ENCODE measurements at regions of chr12 and their contacts with region 1.

Region 1: GRCh38 chr12:93378373-93379325 is 924 bp downstream of the NUDT4 start:
- DNase-seq: no peak
- ATAC-seq: peak; percentile 51
- H3K4me3 ChIP-seq: peak overlapping the region; percentile 87
- H3K27ac ChIP-seq: peak overlapping the region; percentile 98
- H3K4me1 ChIP-seq: peaks cover 15% of the 10 kb centered on the region
- H3K27me3 ChIP-seq: no peaks in the 10 kb centered on the region
- CTCF ChIP-seq: no peak
- EP300 ChIP-seq: no peak
- POLR2A ChIP-seq: peak; percentile 56
- RAD21 ChIP-seq: no peak

Region 2: DNA sequence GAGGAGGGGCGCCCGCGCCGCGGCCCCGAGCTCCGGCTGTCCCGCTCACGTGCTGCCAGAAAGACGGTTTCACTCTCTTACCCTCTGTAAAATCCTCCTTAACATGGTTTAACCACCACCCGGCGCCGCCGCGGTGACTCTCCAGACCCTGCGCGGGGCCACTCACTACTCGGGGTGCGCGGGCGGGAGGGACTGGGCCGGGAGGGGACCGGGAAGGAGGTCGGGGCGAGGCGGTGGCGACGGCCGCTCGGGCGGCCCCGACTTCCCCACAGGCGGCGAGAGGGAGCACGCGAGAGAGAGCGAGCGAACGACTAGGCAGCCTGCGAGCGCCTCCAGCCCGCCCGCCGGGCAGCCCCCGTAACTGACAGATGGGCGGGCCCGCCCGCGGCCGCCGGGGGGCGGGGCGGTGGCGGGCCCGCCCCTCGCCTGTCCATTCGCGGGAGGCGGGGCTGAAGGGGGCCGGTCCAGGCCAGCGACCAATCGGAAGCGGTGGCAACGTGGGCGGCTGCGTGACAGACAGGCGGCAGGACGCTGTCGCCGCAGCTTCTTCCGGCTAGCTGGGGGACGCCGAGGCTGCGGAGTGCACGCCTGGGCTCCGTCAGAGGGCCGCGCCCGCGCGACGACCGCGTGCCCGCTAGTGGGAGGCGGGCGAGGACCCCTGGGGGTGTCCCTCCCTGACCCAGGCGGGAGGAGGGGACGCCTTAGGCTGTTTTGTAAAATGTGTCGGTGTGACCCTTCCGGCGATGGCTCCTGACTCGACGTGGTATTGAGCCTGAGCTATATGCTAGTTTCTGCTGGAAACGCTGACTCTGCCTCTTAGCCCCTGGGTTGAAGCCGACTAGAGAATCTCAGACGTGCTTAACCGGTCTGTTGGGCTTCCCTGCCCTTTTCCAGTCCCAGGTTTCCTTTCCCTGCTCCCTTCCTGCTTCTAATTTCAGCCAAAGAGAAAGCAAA is 449.4 kb before region 1 on chr12 and contains the start of gene EEA1:
- CTCF ChIA-PET with region 1: interaction called, 6 read pairs
- POLR2A ChIA-PET with region 1: no interaction called
- RAD21 ChIA-PET with region 1: interaction called, 8 read pairs
- SMC1A ChIA-PET with region 1: interaction called, 5 read pairs
- in situ Hi-C with region 1: no loop called
- intact Hi-C with region 1: loop called (anchors 5 kb)
- DNase-seq: peak; percentile 84
- ATAC-seq: peak; percentile 87
- H3K4me3 ChIP-seq: peak within 1 kb of the TSS; percentile 79
- H3K27ac ChIP-seq: peak within 1 kb of the TSS; percentile 98
- H3K4me1 ChIP-seq: peaks cover 4% of the 10 kb centered on the region
- H3K27me3 ChIP-seq: no peaks in the 10 kb centered on the region
- CTCF ChIP-seq: peak in 2 of 3 experiments; percentile 29 to 31; a peak in 3 of 6 replicates
- EP300 ChIP-seq: peak; percentile 30 to 35; a peak in 2 of 4 replicates
- POLR2A ChIP-seq: peak; percentile 96
- RAD21 ChIP-seq: peak; percentile 16; the same call in 1 of the 2 replicates
- polyA plus RNA-seq, gene EEA1: 5.5 to 9.5 TPM

Region 3: GRCh38 chr12:93060666-93061471 is 317.8 kb before region 1 on chr12:
- CTCF ChIA-PET with region 1: interaction called, 3 read pairs
- POLR2A ChIA-PET with region 1: no interaction called
- RAD21 ChIA-PET with region 1: interaction called, 13 read pairs
- SMC1A ChIA-PET with region 1: interaction called, 4 read pairs
- in situ Hi-C with region 1: no loop called
- intact Hi-C with region 1: no loop called
- DNase-seq: peak; percentile 21
- ATAC-seq: peak; percentile 61
- H3K4me3 ChIP-seq: 0 out of 2 replicates have a peak overlapping the region, but pooled peaks have one; percentile 2
- H3K27ac ChIP-seq: peak overlapping the region; percentile 61
- H3K4me1 ChIP-seq: peaks cover 26% of the 10 kb centered on the region
- H3K27me3 ChIP-seq: no peaks in the 10 kb centered on the region
- CTCF ChIP-seq: no peak
- EP300 ChIP-seq: peak in 1 of 2 experiments; percentile 29; a peak in 1 of 4 replicates
- POLR2A ChIP-seq: no peak
- RAD21 ChIP-seq: peak; percentile 8; the same call in 1 of the 2 replicates

Region 4: GRCh38 chr12:93109551-93110203 is 269.0 kb before region 1 on chr12:
- CTCF ChIA-PET with region 1: interaction called, 3 read pairs
- POLR2A ChIA-PET with region 1: interaction called, 5 read pairs
- RAD21 ChIA-PET with region 1: interaction called, 4 read pairs
- SMC1A ChIA-PET with region 1: interaction called, 10 read pairs
- in situ Hi-C with region 1: no loop called
- intact Hi-C with region 1: no loop called
- DNase-seq: no peak
- ATAC-seq: peak; percentile 95
- H3K4me3 ChIP-seq: no peak overlapping the region
- H3K27ac ChIP-seq: no peak overlapping the region
- H3K4me1 ChIP-seq: peaks cover 14% of the 10 kb centered on the region
- H3K27me3 ChIP-seq: no peaks in the 10 kb centered on the region
- CTCF ChIP-seq: no peak
- EP300 ChIP-seq: peak; percentile 58 to 77
- POLR2A ChIP-seq: no peak
- RAD21 ChIP-seq: no peak; the same call in 1 of the 2 replicates

Region 5: GRCh38 chr12:93256256-93256969 is 122.2 kb before region 1 on chr12:
- CTCF ChIA-PET with region 1: interaction called, 3 read pairs
- POLR2A ChIA-PET with region 1: interaction called, 3 read pairs
- RAD21 ChIA-PET with region 1: no interaction called
- SMC1A ChIA-PET with region 1: interaction called, 12 read pairs
- in situ Hi-C with region 1: no loop called
- intact Hi-C with region 1: no loop called
- DNase-seq: no peak
- ATAC-seq: no peak
- H3K4me3 ChIP-seq: no peak overlapping the region
- H3K27ac ChIP-seq: no peak overlapping the region
- H3K4me1 ChIP-seq: no peaks in the 10 kb centered on the region
- H3K27me3 ChIP-seq: no peaks in the 10 kb centered on the region
- CTCF ChIP-seq: no peak
- EP300 ChIP-seq: no peak
- POLR2A ChIP-seq: no peak
- RAD21 ChIP-seq: no peak

Region 6: DNA sequence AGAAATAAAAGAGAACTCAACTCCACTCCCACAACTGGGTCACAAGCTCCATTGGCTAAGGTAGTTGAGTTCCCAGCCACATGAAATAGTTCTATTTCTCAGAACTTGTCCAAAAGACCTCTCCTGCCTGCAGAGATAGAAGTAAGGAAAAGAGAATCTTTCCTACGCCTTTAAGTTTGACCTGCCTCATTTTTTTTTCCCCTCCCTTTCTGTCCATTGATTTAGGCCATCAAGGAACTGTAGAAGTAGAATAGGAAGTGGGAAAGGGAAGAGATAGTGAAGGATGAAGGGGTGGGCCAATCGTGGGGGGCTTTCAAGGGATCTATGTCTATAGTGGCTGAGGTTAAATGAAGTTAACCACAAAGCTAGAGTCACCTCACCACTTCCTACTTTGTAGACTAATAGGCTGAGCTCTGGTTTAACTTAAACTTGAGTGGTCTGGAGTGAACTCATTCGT is 14.8 kb before region 1 on chr12:
- CTCF ChIA-PET with region 1: interaction called, 6 read pairs
- POLR2A ChIA-PET with region 1: no interaction called
- RAD21 ChIA-PET with region 1: interaction called, 22 read pairs
- SMC1A ChIA-PET with region 1: interaction called, 11 read pairs
- in situ Hi-C with region 1: no loop called
- intact Hi-C with region 1: no loop called
- DNase-seq: no peak
- ATAC-seq: peak; percentile 96
- H3K4me3 ChIP-seq: no peak overlapping the region
- H3K27ac ChIP-seq: no peak overlapping the region; the same call in 1 of the 2 replicates
- H3K4me1 ChIP-seq: peaks cover 16% of the 10 kb centered on the region
- H3K27me3 ChIP-seq: no peaks in the 10 kb centered on the region
- CTCF ChIP-seq: no peak
- EP300 ChIP-seq: no peak
- POLR2A ChIP-seq: no peak
- RAD21 ChIP-seq: no peak

Region 7: DNA sequence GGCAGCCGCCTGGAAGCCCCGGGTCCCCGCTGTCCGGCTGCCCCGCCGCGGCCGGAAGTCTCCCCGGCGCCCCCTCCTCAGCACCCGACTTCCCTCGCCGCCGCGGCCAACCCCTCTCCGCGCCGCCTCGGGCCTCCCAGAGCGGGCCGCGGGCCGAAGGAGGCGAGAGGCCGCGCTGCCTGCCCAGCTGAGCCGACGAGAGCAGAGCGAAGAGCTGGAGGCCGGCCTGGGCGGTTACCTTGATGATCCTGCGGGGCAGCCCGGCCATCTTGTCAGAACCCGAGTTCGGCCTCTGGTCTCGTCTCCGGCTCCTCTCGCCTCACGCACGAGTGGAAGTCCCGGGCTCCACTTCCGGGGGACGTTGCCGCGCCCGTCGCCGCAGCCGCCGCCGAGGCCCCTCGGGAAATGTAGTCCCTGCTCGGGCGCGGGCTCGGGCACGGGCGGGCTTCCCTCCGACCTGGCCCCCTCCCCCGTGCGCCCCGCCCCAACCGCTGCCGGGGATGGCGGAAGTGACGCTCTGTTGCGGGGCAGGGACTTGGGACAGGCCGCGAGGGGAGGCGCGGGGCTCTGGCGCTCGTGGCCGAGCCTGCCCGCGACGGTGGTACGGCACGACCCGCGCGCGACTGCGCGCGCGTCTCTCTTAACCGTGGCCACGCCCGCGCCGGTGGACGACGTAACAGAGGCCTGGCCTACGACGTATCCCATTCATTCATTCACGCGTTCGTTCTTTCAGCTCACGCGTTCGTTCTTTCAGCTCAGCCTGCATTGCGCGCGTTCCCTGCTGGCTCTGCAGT is 63.2 kb after region 1 on chr12 and contains the start of gene UBE2N:
- CTCF ChIA-PET with region 1: interaction called, 3 read pairs
- POLR2A ChIA-PET with region 1: interaction called, 4 read pairs
- RAD21 ChIA-PET with region 1: interaction called, 28 read pairs
- SMC1A ChIA-PET with region 1: interaction called, 9 read pairs
- in situ Hi-C with region 1: no loop called
- intact Hi-C with region 1: no loop called
- DNase-seq: peak; percentile 70
- ATAC-seq: peak; percentile 87
- H3K4me3 ChIP-seq: peak within 1 kb of the TSS; percentile 83
- H3K27ac ChIP-seq: peak within 1 kb of the TSS; percentile 73
- H3K4me1 ChIP-seq: peaks cover 9% of the 10 kb centered on the region
- H3K27me3 ChIP-seq: no peaks in the 10 kb centered on the region
- CTCF ChIP-seq: no peak
- EP300 ChIP-seq: no peak
- POLR2A ChIP-seq: peak; percentile 96
- RAD21 ChIP-seq: no peak
- polyA plus RNA-seq, gene UBE2N: 699 to 945 TPM

Region 8: GRCh38 chr12:93638095-93638494 is 259.4 kb after region 1 on chr12:
- CTCF ChIA-PET with region 1: no interaction called
- POLR2A ChIA-PET with region 1: no interaction called
- RAD21 ChIA-PET with region 1: no interaction called
- SMC1A ChIA-PET with region 1: no interaction called
- in situ Hi-C with region 1: no loop called
- intact Hi-C with region 1: no loop called
- DNase-seq: no peak
- ATAC-seq: no peak
- H3K4me3 ChIP-seq: no peak overlapping the region
- H3K27ac ChIP-seq: no peak overlapping the region
- H3K4me1 ChIP-seq: no peaks in the 10 kb centered on the region
- H3K27me3 ChIP-seq: no peaks in the 10 kb centered on the region
- CTCF ChIP-seq: no peak
- EP300 ChIP-seq: no peak
- POLR2A ChIP-seq: no peak
- RAD21 ChIP-seq: no peak

Measured in GM12878 (cell line).